Mucosa of descending colon (tissue), 3 donors: ENCODE measurements at regions of chr6 and their contacts with region 1.

Region 1: GRCh38 chr6:43269273-43270007 is 26.2 kb downstream of the TTBK1 start:
- DNase-seq: peak; percentile 77 to 89 (median 81)
- ATAC-seq: peak; percentile 60
- H3K4me3 ChIP-seq: no peak overlapping the region
- H3K4me1 ChIP-seq: peaks cover 40% of the 10 kb centered on the region
- CTCF ChIP-seq: no peak

Region 2: DNA sequence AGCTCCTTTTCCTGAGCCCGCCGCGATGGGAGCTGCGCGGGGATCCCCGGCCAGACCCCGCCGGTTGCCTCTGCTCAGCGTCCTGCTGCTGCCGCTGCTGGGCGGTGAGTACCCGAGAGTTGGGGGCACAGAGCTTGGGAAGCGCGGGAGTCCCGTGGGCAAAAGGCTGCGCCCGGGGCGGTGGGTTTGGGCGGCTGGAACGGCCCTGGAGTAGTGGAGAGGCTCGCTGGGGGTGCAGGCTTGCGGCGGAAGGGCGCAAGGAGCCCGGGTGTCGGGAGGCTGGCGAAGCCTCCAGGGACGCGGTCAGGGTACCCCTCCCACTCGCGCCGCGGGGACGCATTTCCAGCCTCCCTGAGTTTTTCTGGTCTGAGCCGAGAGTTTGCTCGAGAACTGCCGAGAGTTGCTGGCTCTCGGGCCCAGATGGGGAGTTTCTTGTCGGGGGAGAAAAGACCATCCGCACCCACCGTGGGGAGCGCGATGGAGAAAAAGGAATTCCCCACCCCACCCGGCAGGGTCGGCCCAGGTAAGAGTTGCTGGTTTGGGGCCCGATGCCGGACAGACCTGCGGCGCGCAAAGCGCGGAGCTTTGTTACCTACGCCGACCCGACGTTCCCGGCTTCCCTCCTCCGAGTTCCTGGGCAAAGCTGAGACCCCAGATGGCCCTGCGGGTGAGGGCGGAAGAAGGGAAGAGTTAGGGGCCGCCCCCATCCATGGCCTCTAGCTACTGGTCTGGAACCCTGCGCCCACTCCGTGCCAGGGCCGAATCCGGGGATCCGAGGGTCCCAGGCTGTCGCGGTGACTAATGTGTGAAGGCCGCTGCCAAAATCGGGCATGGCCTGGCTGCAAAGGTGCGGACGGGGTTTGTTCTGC is 192.7 kb before region 1 on chr6:
- intact Hi-C with region 1: no loop called
- DNase-seq: peak in 2 of 3 donors; percentile 23 to 44
- ATAC-seq: peak; percentile 58
- H3K4me3 ChIP-seq: peak overlapping the region; percentile 30
- H3K4me1 ChIP-seq: peaks cover 9% of the 10 kb centered on the region
- CTCF ChIP-seq: no peak

Region 3: DNA sequence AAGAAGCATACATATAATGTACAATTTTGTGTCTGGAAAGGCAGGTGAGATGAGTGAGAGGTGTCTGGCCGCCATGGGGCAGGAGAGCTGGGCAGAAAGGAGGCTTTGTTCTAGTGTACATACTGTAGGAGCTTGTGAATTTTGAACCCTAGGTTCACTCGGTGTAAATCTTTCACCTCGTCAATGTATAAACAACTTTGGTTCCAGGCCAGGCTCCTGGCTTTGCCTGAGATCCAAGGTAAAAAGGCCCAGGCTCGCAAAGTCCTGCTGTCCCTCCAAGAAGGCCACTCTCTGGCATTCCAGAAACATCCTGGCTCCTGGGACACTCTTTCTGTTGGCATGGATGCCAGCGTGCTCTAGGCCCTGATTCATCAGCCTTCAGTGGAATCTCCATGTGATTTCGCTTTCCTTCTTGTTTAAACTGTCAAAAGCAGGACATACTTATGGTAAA is 21.5 kb after region 1 on chr6:
- intact Hi-C with region 1: loop called in 1 of 2 experiments (anchors 2 kb)
- DNase-seq: no peak
- ATAC-seq: peak; percentile 47
- H3K4me3 ChIP-seq: no peak overlapping the region
- H3K4me1 ChIP-seq: peaks cover 16% of the 10 kb centered on the region
- CTCF ChIP-seq: no peak

Region 4: DNA sequence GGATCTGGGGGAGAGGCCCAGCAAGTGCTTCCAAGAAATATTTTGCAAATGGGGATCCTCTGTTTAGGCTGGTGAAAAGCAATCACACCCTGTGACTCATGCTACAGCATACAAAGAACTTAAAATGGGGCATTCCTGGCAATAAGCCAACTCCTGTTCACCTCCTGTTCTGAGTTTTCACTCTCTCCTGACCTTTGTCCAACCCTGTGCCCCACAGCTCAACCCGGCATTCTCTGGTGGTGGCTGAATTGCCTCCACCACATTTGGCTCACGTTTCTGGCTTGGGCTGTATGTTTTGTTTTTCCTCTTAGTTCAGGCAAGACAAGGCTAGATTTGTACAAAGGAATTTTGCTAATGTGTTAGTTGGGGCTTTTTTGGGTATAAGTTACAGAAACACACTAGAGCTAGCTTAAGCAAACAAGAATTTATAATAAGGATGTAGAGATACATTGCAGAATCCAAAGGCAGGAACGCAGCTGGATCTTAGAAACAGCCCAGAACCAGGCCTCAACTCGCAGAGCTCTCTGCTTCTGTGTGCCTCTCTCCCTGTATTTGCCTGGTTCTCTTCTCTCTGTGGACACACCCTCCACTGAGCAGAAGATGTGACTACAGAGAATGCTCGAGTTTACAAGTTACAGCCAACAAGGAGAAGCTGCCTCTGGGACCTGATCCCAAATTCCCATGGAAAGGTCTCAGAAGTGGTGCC is 167.3 kb after region 1 on chr6:
- intact Hi-C with region 1: no loop called
- DNase-seq: peak in 1 of 3 donors; percentile 52
- ATAC-seq: peak; percentile 83
- H3K4me3 ChIP-seq: no peak overlapping the region
- H3K4me1 ChIP-seq: peaks cover 10% of the 10 kb centered on the region
- CTCF ChIP-seq: no peak